ENCODE measurements at regions of chr1 and their contacts with region 1.

Region 1: GRCh38 chr1:8201238-8201861 is 116.6 kb upstream of the SLC45A1 start:
- DNase-seq: no peak
- H3K4me3 ChIP-seq: no peak overlapping the region
- H3K27ac ChIP-seq: no peak overlapping the region
- H3K4me1 ChIP-seq: no peaks in the 10 kb centered on the region
- CTCF ChIP-seq: no peak

Region 2: GRCh38 chr1:8239306-8240023 is 38.1 kb after region 1 on chr1:
- CTCF ChIA-PET with region 1: interaction called, 15 read pairs
- POLR2A ChIA-PET with region 1: no interaction called
- intact Hi-C with region 1: no loop called
- DNase-seq: no peak
- H3K4me3 ChIP-seq: no peak overlapping the region
- H3K27ac ChIP-seq: no peak overlapping the region
- H3K4me1 ChIP-seq: no peaks in the 10 kb centered on the region
- CTCF ChIP-seq: no peak